Heart left ventricle (tissue), 16 donors: ENCODE measurements at regions of chr12 and their contacts with region 1.

Region 1: DNA sequence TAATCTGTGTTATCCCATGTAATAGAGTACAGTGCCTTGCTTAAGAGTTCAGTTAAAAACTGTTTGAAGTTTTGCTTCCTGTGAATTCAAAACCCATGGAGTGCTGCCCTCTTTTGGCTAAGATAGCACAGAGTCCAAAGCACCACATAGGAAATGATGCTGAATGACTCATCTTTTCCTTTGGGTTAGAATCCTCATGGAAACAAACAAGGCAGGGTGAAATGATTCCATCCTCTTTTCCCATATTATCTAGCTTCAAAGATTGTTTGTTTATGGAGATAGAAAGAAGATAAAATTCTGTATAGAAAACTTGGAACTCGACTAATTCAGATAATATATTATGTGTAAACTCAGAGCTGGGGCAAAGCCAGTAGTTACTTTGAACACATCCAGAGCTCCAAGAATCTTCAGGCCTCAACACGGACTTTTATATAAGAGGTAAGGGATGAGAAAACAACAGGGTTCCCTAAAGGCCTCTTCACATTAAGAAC is 87.4 kb downstream of the OTOGL start:
- DNase-seq: peak in 3 of 5 donors; percentile 35 to 71 (median 63)
- ATAC-seq: peak; percentile 88 to 96 (median 92)
- H3K4me3 ChIP-seq: no peak overlapping the region
- H3K27ac ChIP-seq: peak overlapping the region; percentile 78 to 91 (median 86)
- H3K4me1 ChIP-seq: peaks cover 0 to 38% (median 16%) of the 10 kb centered on the region in 12 donors
- H3K27me3 ChIP-seq: no peaks in the 10 kb centered on the region
- CTCF ChIP-seq: peak; percentile 54 to 92 (median 79)
- POLR2A ChIP-seq: no peak

Region 2: GRCh38 chr12:79547735-79548609 is 638.8 kb before region 1 on chr12:
- intact Hi-C with region 1: loop called in 2 of 10 experiments (anchors 5 kb)
- DNase-seq: peak in 1 of 5 donors; percentile 34
- ATAC-seq: peak in 3 of 4 donors; percentile 59 to 75 (median 73)
- H3K4me3 ChIP-seq: no peak overlapping the region
- H3K27ac ChIP-seq: peak overlapping the region in 4 of 12 donors; percentile 2 to 8 (median 6)
- H3K4me1 ChIP-seq: peaks cover 0 to 22% (median 6%) of the 10 kb centered on the region in 12 donors
- H3K27me3 ChIP-seq: no peaks in the 10 kb centered on the region
- CTCF ChIP-seq: peak; percentile 52 to 81 (median 65)
- POLR2A ChIP-seq: no peak

Region 3: GRCh38 chr12:79690638-79691493 is 495.9 kb before region 1 on chr12 and contains the start of gene PAWR:
- intact Hi-C with region 1: loop called in 2 of 10 experiments (anchors 2 to 5 kb)
- DNase-seq: peak; percentile 43 to 82 (median 60)
- ATAC-seq: peak; percentile 52 to 81 (median 72)
- H3K4me3 ChIP-seq: peak within 1 kb of the TSS; percentile 60 to 99 (median 89)
- H3K27ac ChIP-seq: peak within 1 kb of the TSS; percentile 53 to 87 (median 70)
- H3K4me1 ChIP-seq: peaks cover 0 to 30% (median 7%) of the 10 kb centered on the region in 12 donors
- H3K27me3 ChIP-seq: peaks cover 0 to 44% (median 0%) of the 10 kb centered on the region in 9 donors
- CTCF ChIP-seq: peak in 3 of 12 donors; percentile 13 to 27 (median 15)
- POLR2A ChIP-seq: no peak
- total RNA-seq, gene PAWR: 4.8 to 29.0 (median 11.4) TPM

Region 4: GRCh38 chr12:79766705-79767464 is 419.9 kb before region 1 on chr12:
- intact Hi-C with region 1: loop called in 3 of 10 experiments (anchors 10 kb)
- DNase-seq: no peak
- ATAC-seq: no peak
- H3K4me3 ChIP-seq: no peak overlapping the region
- H3K27ac ChIP-seq: no peak overlapping the region
- H3K4me1 ChIP-seq: peaks cover 0 to 12% (median 3%) of the 10 kb centered on the region in 12 donors
- H3K27me3 ChIP-seq: no peaks in the 10 kb centered on the region
- CTCF ChIP-seq: no peak
- POLR2A ChIP-seq: no peak

Region 5: DNA sequence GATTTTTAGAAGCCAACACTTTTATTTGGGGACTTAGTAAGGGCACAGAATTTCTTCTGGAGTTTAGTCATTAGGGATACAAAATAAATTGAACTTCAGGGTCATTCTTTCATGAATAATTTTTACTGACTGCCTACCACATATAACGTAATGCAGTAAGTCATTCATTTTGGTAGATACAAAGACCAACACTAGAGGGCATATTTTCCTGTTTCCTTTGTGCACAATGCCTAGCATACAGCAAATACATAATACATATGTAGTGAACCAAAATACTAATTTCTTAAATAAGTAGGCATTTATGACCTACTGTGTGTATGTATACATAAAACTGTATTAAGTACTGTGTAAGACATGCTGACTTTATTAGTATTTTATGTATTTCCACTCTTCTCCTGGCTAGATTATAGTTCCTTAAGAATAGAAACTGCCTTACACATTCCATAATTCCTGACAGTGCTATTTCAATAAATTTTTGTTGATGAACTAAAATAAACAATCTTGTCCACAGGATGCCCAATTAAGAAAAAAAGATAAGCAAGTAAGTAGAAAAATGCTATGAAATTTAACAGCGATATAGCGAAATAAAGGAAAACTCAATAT is 299.8 kb before region 1 on chr12:
- intact Hi-C with region 1: loop called in 7 of 10 experiments (anchors 5 to 10 kb)
- DNase-seq: no peak
- ATAC-seq: peak in 2 of 4 donors; percentile 63 to 69
- H3K4me3 ChIP-seq: no peak overlapping the region
- H3K27ac ChIP-seq: no peak overlapping the region
- H3K4me1 ChIP-seq: peaks cover 0 to 90% (median 60%) of the 10 kb centered on the region in 12 donors
- H3K27me3 ChIP-seq: no peaks in the 10 kb centered on the region
- CTCF ChIP-seq: peak; percentile 33 to 66 (median 56)
- POLR2A ChIP-seq: no peak

Region 6: GRCh38 chr12:80053048-80053790 is 133.6 kb before region 1 on chr12:
- intact Hi-C with region 1: loop called in 2 of 10 experiments (anchors 10 kb)
- DNase-seq: peak; percentile 50 to 74 (median 62)
- ATAC-seq: peak; percentile 74 to 88 (median 76)
- H3K4me3 ChIP-seq: no peak overlapping the region
- H3K27ac ChIP-seq: peak overlapping the region in 6 of 12 donors; percentile 1 to 77 (median 17)
- H3K4me1 ChIP-seq: peaks cover 0 to 23% (median 4%) of the 10 kb centered on the region in 12 donors
- H3K27me3 ChIP-seq: no peaks in the 10 kb centered on the region
- CTCF ChIP-seq: no peak
- POLR2A ChIP-seq: no peak